ENCODE measurements at regions of chr5 and their contacts with region 1.

Region 1: DNA sequence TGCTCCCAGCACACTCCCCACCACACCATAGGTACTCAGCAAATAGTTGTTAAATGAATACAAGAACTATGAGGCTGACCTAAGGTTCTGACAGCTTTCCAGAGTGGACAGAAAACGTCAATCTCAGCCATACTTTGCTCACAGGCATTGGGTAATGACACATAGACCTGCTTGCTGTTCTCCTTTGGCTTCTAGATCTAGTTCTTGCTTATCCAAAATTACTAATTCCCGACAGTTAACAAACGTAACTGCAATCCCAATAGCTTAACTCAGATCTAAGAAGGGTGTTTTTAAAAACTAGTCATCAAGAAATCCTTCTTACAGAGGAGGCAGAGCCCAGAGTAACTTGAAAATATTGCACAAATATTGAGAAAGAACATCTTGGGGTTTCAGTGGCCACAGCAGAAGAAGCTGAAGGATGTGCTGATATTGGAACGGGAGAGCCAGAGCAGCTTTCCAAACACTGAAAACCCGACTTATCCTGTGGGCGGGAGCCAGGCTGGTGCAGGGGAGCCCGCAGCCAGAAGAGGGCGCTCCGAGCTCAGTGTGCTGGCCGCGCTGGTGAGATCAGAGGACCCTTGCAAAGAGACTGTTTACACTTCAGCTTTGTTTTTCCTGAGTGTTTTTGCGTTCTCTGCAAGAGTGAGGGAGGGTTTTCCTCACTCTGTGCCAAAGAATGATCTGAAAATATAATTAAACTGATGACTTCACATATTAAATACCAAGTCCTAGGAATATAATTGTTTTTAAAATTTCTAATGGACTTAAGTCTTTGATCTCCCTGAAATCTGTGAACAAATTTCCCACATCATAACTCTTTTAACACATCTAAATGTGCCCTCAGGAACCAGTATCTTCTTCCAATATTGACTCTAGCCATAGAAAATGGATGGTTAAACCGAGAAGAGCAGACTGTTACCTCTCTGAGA is 30.3 kb downstream of the FGF1 start:
- DNase-seq: peak; percentile 84
- H3K4me3 ChIP-seq: no peak overlapping the region
- H3K27ac ChIP-seq: no peak overlapping the region
- H3K4me1 ChIP-seq: no peaks in the 10 kb centered on the region
- H3K27me3 ChIP-seq: peaks cover 2 to 14% of the 10 kb centered on the region in 2 experiments
- CTCF ChIP-seq: peak; percentile 96 to 98
- POLR2A ChIP-seq: no peak

Region 2: DNA sequence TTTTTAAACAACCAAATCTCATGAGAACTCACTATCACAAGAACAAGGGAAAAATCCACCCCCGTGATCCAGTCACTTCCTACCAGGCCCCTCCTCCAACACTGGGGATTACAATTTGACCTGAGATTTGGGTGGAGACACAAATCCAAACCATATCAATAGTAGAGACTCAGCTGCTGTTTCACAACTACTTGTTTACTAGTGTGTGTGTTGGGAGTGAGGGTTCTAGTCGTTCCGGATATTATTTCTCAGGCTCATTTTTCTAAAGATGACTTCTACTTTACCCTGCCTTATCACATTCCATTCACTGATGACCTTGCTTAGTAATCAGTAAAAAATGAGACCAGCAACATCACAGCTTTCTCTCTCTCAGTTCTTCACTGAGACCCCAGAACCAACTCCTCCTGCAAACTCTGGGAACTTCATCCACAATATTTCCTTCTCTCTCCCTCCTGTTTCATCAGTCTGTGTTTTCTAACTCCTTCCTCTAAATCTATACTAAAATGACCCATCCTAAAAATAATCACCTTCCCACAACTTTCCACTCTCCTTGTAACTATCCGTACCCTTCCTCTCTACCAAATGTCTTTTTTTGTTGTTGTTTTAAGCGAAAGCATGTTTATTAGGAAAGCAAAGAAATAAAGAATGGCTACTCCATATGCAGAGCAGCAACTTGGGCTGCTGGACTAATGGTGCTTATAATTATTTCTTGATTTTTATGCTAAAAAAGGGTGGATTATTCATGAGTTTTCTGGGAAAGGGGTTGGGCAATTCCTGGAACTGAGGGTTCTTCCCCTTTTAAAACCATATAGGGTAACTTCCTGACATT is 209.3 kb before region 1 on chr5:
- CTCF ChIA-PET with region 1: no interaction called
- POLR2A ChIA-PET with region 1: no interaction called
- dilution Hi-C with region 1: no loop called
- intact Hi-C with region 1: no loop called
- DNase-seq: peak; percentile 67
- H3K4me3 ChIP-seq: peak overlapping the region in 1 of 3 experiments; percentile 5
- H3K27ac ChIP-seq: peak overlapping the region; percentile 88
- H3K4me1 ChIP-seq: peaks cover 20% of the 10 kb centered on the region
- H3K27me3 ChIP-seq: no peaks in the 10 kb centered on the region
- CTCF ChIP-seq: no peak
- POLR2A ChIP-seq: peak; percentile 64

Region 3: GRCh38 chr5:142466195-142466971 is 189.2 kb before region 1 on chr5:
- CTCF ChIA-PET with region 1: no interaction called
- POLR2A ChIA-PET with region 1: no interaction called
- dilution Hi-C with region 1: no loop called
- intact Hi-C with region 1: no loop called
- DNase-seq: peak; percentile 34
- H3K4me3 ChIP-seq: no peak overlapping the region
- H3K27ac ChIP-seq: peak overlapping the region; percentile 13
- H3K4me1 ChIP-seq: peaks cover 11% of the 10 kb centered on the region
- H3K27me3 ChIP-seq: no peaks in the 10 kb centered on the region
- CTCF ChIP-seq: no peak
- POLR2A ChIP-seq: no peak

Region 4: DNA sequence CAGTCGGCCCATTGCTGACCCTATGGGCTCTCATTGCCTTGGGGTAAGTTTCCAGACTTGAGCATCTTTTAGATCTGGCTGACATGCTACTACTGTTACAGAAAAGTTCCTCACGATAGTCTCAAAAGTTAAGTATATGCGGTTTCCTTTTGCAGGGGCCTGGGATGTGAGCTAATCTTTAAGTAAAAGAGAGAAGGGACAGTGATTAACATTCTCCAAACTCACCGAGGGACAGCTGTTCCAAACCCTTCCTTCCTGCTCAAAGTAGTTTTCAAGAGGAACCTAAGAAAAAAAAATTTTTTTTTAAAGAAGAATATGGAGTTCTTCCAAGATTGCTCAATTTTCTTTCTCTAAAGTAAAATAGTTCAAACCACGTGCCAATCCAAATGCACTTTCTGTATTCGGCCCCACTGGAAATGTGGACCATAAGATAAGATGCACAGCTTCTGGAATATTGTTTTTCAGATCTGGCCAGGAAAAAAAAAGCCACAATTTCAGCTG is 162.8 kb before region 1 on chr5:
- CTCF ChIA-PET with region 1: no interaction called
- POLR2A ChIA-PET with region 1: no interaction called
- dilution Hi-C with region 1: no loop called
- intact Hi-C with region 1: no loop called
- DNase-seq: peak; percentile 68
- H3K4me3 ChIP-seq: no peak overlapping the region
- H3K27ac ChIP-seq: no peak overlapping the region
- H3K4me1 ChIP-seq: peaks cover 7% of the 10 kb centered on the region
- H3K27me3 ChIP-seq: no peaks in the 10 kb centered on the region
- CTCF ChIP-seq: no peak
- POLR2A ChIP-seq: no peak

Region 5: DNA sequence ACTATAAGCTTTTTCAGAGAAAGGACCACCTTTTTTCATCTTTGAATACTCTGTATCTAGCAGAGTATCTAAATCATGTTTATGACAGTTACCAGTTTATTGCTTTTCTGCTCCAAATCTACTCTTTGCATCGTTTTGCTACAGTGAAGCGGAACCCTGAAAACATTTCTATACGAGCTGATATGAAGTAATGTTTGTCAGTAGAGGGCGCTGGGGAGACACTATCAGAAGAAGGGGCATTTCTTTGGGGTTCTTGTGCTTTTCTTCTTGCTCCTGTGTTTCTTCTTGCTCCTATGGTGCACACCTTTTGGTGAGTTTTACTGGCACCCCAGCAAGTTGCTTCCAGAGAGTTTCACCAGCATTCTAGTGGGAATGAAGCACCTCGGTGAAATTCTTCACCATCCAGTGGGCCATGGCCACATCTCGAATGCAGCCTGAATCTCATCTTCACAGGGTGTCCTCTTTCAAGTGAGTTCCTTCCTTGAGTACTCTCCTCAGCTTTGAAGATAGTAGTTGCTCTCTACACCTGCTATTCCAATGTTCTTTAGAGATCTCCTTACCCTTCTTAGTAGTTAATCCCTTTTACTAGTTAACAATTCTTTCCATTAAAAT is 68.1 kb before region 1 on chr5:
- CTCF ChIA-PET with region 1: interaction called, 32 read pairs
- POLR2A ChIA-PET with region 1: no interaction called
- dilution Hi-C with region 1: no loop called
- intact Hi-C with region 1: no loop called
- DNase-seq: peak; percentile 49
- H3K4me3 ChIP-seq: no peak overlapping the region
- H3K27ac ChIP-seq: no peak overlapping the region
- H3K4me1 ChIP-seq: no peaks in the 10 kb centered on the region
- H3K27me3 ChIP-seq: peaks cover 6 to 18% of the 10 kb centered on the region in 2 experiments
- CTCF ChIP-seq: peak; percentile 49 to 59
- POLR2A ChIP-seq: no peak

Region 6: GRCh38 chr5:142611154-142611553 is 44.4 kb before region 1 on chr5:
- CTCF ChIA-PET with region 1: interaction called, 58 read pairs
- POLR2A ChIA-PET with region 1: no interaction called
- dilution Hi-C with region 1: no loop called
- intact Hi-C with region 1: loop called (anchors 1 kb)
- DNase-seq: peak; percentile 74
- H3K4me3 ChIP-seq: no peak overlapping the region
- H3K27ac ChIP-seq: no peak overlapping the region
- H3K4me1 ChIP-seq: no peaks in the 10 kb centered on the region
- H3K27me3 ChIP-seq: peaks cover 2 to 27% of the 10 kb centered on the region in 2 experiments
- CTCF ChIP-seq: peak; percentile 87 to 90
- POLR2A ChIP-seq: no peak

Region 7: GRCh38 chr5:142636076-142636475 is 19.5 kb before region 1 on chr5:
- CTCF ChIA-PET with region 1: interaction called, 10 read pairs
- POLR2A ChIA-PET with region 1: no interaction called
- dilution Hi-C with region 1: no loop called
- intact Hi-C with region 1: no loop called
- DNase-seq: no peak
- H3K4me3 ChIP-seq: no peak overlapping the region
- H3K27ac ChIP-seq: no peak overlapping the region
- H3K4me1 ChIP-seq: peaks cover 5% of the 10 kb centered on the region
- H3K27me3 ChIP-seq: peaks cover 0 to 4% of the 10 kb centered on the region in 2 experiments
- CTCF ChIP-seq: no peak
- POLR2A ChIP-seq: no peak

Region 8: GRCh38 chr5:142685418-142686209 is 30.0 kb after region 1 on chr5 and contains the start of gene FGF1:
- CTCF ChIA-PET with region 1: interaction called, 33 read pairs
- POLR2A ChIA-PET with region 1: no interaction called
- dilution Hi-C with region 1: no loop called
- intact Hi-C with region 1: no loop called
- DNase-seq: no peak
- H3K4me3 ChIP-seq: no peak within 1 kb of the TSS
- H3K27ac ChIP-seq: no peak within 1 kb of the TSS
- H3K4me1 ChIP-seq: peaks cover 7% of the 10 kb centered on the region
- H3K27me3 ChIP-seq: peaks cover 17 to 23% of the 10 kb centered on the region in 2 experiments
- CTCF ChIP-seq: no peak
- POLR2A ChIP-seq: no peak
- total RNA-seq, gene FGF1: not detected in 2 replicates

Region 9: DNA sequence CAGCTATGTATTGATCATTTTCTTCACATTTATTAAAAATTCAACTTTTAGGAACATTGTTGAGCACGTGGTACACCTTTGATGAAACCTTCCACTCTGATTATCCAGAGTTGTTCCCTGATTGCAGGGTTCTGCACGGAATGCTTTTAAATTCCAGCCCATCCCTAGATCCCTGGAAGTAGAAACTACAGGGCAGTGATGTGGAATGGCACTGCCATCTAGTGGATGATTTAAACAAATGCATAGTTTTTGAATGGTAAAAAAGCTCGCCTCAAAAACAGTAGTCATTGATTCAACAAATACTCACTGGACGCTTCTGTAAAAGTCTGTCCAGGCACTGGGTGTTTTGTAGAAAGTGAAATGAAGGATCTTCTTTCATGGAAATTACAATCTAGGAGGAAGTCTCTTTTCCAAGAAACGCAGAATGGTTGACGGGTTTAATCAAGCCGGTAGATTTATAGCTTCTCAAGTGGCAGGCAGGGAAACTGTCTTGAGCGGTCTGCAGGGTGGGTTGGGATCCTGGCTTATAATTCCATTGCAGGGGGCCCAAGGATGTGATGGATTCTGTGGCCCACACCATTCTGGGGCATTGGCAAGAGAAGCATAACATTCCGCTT is 233.0 kb after region 1 on chr5:
- CTCF ChIA-PET with region 1: interaction called, 67 read pairs
- POLR2A ChIA-PET with region 1: no interaction called
- dilution Hi-C with region 1: no loop called
- intact Hi-C with region 1: loop called (anchors 1 kb)
- DNase-seq: peak; percentile 55
- H3K4me3 ChIP-seq: no peak overlapping the region
- H3K27ac ChIP-seq: no peak overlapping the region
- H3K4me1 ChIP-seq: peaks cover 3% of the 10 kb centered on the region
- H3K27me3 ChIP-seq: no peaks in the 10 kb centered on the region
- CTCF ChIP-seq: peak; percentile 50 to 60
- POLR2A ChIP-seq: no peak

Region 10: DNA sequence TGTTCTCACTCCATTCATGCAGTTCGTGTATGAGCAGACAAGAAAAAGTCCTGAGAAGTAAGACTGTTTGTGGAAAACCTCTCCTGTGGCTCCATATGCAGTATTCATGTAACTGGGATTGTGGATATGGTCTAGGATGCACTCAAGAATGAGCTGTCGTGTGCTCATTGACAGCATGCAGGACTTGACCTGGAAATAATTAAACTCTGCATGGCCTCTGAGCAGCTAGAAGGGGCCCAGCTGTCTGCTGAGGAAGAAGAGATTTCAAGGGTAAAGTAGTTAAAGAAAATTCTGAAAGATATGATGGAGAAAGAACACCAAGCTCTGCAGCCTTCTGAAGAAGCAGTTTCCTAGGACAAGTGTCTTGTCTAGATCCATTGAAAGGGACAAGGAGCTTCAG is 1604.5 kb after region 1 on chr5:
- CTCF ChIA-PET with region 1: no interaction called
- POLR2A ChIA-PET with region 1: no interaction called
- dilution Hi-C with region 1: no loop called
- intact Hi-C with region 1: no loop called
- DNase-seq: no peak
- H3K4me3 ChIP-seq: no peak overlapping the region
- H3K27ac ChIP-seq: no peak overlapping the region
- H3K4me1 ChIP-seq: no peaks in the 10 kb centered on the region
- H3K27me3 ChIP-seq: no peaks in the 10 kb centered on the region
- CTCF ChIP-seq: no peak
- POLR2A ChIP-seq: no peak